Naive thymus-derived CD4-positive, alpha-beta T cell (primary cell): ENCODE measurements at regions of chr5 and their contacts with region 1.

Region 1: GRCh38 chr5:43034591-43034968 is 5.5 kb downstream of the ANXA2R start:
- DNase-seq: peak in 1 of 9 donors; percentile 30
- ATAC-seq: no peak
- H3K4me3 ChIP-seq: no peak overlapping the region
- H3K4me3 Mint-ChIP-seq: peak overlapping the region in 8 of 10 donors; percentile 5 to 59 (median 20)
- H3K27ac ChIP-seq: no peak overlapping the region
- H3K27ac Mint-ChIP-seq: peak overlapping the region in 8 of 9 donors; percentile 8 to 100 (median 49)
- H3K4me1 ChIP-seq: peaks cover 16 to 17% of the 10 kb centered on the region in 2 donors
- H3K4me1 Mint-ChIP-seq: peaks cover 18 to 69% (median 59%) of the 10 kb centered on the region in 7 donors
- H3K27me3 ChIP-seq: no peaks in the 10 kb centered on the region
- H3K27me3 Mint-ChIP-seq: no peaks in the 10 kb centered on the region

Region 2: GRCh38 chr5:43008369-43009153 is 26.0 kb before region 1 on chr5:
- CTCF ChIA-PET with region 1: interaction called, 11 read pairs
- POLR2A ChIA-PET with region 1: interaction called, 436 read pairs
- intact Hi-C with region 1: no loop called
- DNase-seq: peak; percentile 79 to 95 (median 90)
- ATAC-seq: peak; percentile 78
- H3K4me3 ChIP-seq: peak overlapping the region; percentile 72
- H3K4me3 Mint-ChIP-seq: peak overlapping the region; percentile 85 to 98 (median 92)
- H3K27ac ChIP-seq: peak overlapping the region; percentile 92
- H3K27ac Mint-ChIP-seq: peak overlapping the region; percentile 96 to 100 (median 98)
- H3K4me1 ChIP-seq: peaks cover 22 to 24% of the 10 kb centered on the region in 2 donors
- H3K4me1 Mint-ChIP-seq: peaks cover 17 to 47% (median 29%) of the 10 kb centered on the region in 7 donors
- H3K27me3 ChIP-seq: no peaks in the 10 kb centered on the region
- H3K27me3 Mint-ChIP-seq: peaks cover 0 to 4% (median 0%) of the 10 kb centered on the region in 5 donors

Region 3: DNA sequence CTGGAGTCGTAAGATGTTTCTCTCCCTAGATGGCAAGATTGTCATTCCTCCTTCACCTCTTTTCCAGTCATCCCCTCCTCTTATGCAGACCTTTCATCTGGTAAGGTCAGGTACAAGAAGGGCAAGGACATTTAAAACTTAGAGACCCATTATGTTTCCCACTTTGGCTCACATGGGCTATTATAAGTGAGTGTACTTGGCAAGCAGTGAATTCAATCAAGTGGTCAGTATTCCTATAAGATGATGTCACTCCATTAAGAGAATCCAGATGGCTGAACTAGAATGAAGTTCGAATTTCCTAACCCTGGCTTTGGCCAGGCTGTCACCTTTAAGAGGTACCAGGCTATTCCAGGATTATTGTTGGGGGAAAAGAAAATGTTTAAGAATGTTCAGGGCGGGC is 118.4 kb after region 1 on chr5:
- CTCF ChIA-PET with region 1: no interaction called
- POLR2A ChIA-PET with region 1: no interaction called
- intact Hi-C with region 1: no loop called
- DNase-seq: no peak
- ATAC-seq: no peak
- H3K4me3 ChIP-seq: no peak overlapping the region
- H3K4me3 Mint-ChIP-seq: no peak overlapping the region
- H3K27ac ChIP-seq: no peak overlapping the region
- H3K27ac Mint-ChIP-seq: no peak overlapping the region
- H3K4me1 ChIP-seq: no peaks in the 10 kb centered on the region
- H3K4me1 Mint-ChIP-seq: peaks cover 3 to 23% (median 18%) of the 10 kb centered on the region in 7 donors
- H3K27me3 ChIP-seq: no peaks in the 10 kb centered on the region
- H3K27me3 Mint-ChIP-seq: no peaks in the 10 kb centered on the region

Region 4: GRCh38 chr5:43401827-43402226 is 367.2 kb after region 1 on chr5:
- CTCF ChIA-PET with region 1: no interaction called
- POLR2A ChIA-PET with region 1: no interaction called
- intact Hi-C with region 1: no loop called
- DNase-seq: no peak
- ATAC-seq: no peak
- H3K4me3 ChIP-seq: no peak overlapping the region
- H3K4me3 Mint-ChIP-seq: no peak overlapping the region
- H3K27ac ChIP-seq: no peak overlapping the region
- H3K27ac Mint-ChIP-seq: no peak overlapping the region
- H3K4me1 ChIP-seq: peaks cover 0 to 3% of the 10 kb centered on the region in 2 donors
- H3K4me1 Mint-ChIP-seq: peaks cover 6 to 24% (median 15%) of the 10 kb centered on the region in 7 donors
- H3K27me3 ChIP-seq: no peaks in the 10 kb centered on the region
- H3K27me3 Mint-ChIP-seq: peaks cover 0 to 4% (median 0%) of the 10 kb centered on the region in 5 donors